ENCODE measurements at regions of chr10 and their contacts with region 1.

Region 1: DNA sequence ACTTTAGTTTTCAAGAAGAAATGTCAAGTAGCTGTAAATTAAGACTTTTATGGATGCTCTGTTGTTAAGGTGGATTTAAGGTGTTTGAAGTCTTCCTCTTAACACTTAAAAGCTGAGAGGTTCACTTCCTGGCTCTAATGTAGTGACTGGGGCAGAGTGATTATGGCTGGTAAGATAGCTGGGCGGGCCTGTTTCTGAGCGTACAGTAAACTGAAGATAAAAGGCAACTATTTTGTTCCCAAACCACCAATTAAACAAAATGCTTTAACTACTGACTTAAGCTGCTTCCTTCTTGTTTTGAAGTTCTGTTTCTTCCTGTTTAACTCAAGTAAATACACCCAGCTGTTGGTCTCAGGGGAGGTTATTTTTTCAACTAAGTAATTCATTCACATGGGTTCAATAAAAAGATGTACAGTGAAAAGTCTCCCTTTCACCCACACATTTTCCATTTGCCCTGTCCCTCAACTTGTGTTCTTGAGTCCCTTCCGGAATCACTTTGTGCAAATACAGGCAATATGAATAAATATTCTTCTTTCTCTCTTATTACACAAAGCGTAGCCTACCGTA is 19.3 kb downstream of the VWA2 start:
- DNase-seq: no peak
- H3K4me3 ChIP-seq: no peak overlapping the region
- H3K27ac ChIP-seq: no peak overlapping the region
- H3K4me1 ChIP-seq: no peaks in the 10 kb centered on the region
- H3K27me3 ChIP-seq: no peaks in the 10 kb centered on the region
- CTCF ChIP-seq: no peak

Region 2: GRCh38 chr10:114239117-114239993 is 19.0 kb before region 1 on chr10 and contains the start of gene VWA2:
- CTCF ChIA-PET with region 1: no interaction called
- POLR2A ChIA-PET with region 1: interaction called, 11 read pairs
- intact Hi-C with region 1: no loop called
- DNase-seq: peak in 1 of 2 experiments; percentile 27
- H3K4me3 ChIP-seq: no peak within 1 kb of the TSS
- H3K27ac ChIP-seq: no peak within 1 kb of the TSS
- H3K4me1 ChIP-seq: no peaks in the 10 kb centered on the region
- H3K27me3 ChIP-seq: no peaks in the 10 kb centered on the region
- CTCF ChIP-seq: no peak
- total RNA-seq, gene VWA2: 0.48 and 1.2 TPM in 2 replicates